Sciatic nerve (tissue), 2 donors: ENCODE measurements at regions of chr17 and their contacts with region 1.

Region 1: DNA sequence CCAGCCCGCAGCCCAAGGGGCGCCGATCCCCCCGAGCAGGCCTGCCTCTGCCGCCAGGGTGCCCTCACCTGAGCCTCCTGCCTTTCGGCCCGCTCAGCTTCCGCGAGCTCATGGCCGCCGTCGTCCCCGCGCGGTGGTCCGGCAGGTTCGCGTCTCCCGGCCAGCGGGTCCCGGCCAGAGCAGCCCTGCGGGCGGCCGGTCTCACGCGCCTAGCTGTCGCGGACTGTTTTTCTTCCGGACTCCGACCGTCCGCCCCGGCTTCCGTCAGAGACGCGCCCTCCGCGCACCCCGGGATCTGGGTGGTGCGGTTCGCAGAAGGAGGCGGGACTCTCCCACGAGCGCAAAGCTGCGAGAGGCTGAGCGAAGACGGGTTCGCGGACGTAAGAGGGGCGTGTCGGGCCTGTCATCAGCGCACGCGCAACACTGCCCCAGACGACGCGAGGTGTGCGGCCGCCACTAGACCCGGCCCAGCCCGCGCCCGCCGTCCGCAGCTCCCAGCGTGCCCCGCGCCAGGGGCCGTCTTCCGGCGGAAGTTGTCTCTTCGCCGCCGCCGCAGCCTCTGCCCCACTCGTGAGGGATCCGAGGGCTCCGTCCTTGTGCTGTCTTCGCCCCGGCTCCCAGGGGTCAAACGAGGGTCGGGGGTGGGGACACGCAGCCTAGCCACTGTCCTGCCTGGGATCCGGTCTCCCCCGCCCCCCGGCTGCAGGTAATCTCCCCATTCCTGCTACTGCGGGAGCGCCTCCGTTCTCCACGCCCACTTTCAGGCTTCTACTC is at the start of gene INPP5K:
- DNase-seq: peak; percentile 99
- ATAC-seq: peak; percentile 98
- total RNA-seq, gene INPP5K: 46.5 TPM

Region 2: GRCh38 chr17:1153795-1154546 is 362.6 kb before region 1 on chr17:
- intact Hi-C with region 1: no loop called
- DNase-seq: peak; percentile 71
- ATAC-seq: peak; percentile 81

Region 3: GRCh38 chr17:1275962-1276736 is 240.4 kb before region 1 on chr17:
- intact Hi-C with region 1: loop called (anchors 10 kb)
- DNase-seq: peak; percentile 84
- ATAC-seq: peak; percentile 60

Region 4: GRCh38 chr17:1365445-1366039 is 151.0 kb before region 1 on chr17:
- intact Hi-C with region 1: loop called (anchors 2 kb)
- DNase-seq: no peak
- ATAC-seq: peak; percentile 77

Region 5: GRCh38 chr17:1484676-1485421 is 31.7 kb before region 1 on chr17:
- intact Hi-C with region 1: no loop called
- DNase-seq: peak; percentile 69
- ATAC-seq: peak; percentile 6

Region 6: GRCh38 chr17:1639549-1640343 is 123.2 kb after region 1 on chr17:
- intact Hi-C with region 1: no loop called
- DNase-seq: no peak
- ATAC-seq: no peak